SK-N-SH (cell line): ENCODE measurements at regions of chr9 and their contacts with region 1.

Region 1: DNA sequence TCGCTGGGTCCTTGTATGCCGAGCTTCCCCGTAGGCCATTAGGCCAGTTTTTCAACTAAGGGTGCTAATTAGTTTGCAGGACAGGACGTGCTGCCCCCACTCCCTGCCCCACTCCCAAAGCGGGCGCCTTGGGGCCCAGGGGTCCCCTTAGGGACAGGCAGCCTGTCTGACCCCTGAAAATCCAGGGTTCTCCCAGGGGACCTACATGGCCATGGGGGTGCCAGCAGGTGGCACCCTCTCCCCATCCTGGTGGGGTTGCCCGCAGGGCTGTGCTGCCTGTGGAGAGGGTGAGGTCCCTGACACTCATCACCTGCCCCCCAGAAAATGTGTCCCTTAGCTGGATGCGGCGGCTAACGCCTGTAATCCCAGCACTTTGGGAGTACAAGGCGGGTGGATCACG is 8.5 kb upstream of the CCDC187 start:
- DNase-seq: peak; percentile 92
- H3K4me3 ChIP-seq: no peak overlapping the region
- H3K27ac ChIP-seq: no peak overlapping the region
- H3K4me1 ChIP-seq: no peaks in the 10 kb centered on the region; a peak in 1 of 4 replicates
- H3K27me3 ChIP-seq: no peaks in the 10 kb centered on the region
- CTCF ChIP-seq: peak; percentile 68
- EP300 ChIP-seq: no peak
- RAD21 ChIP-seq: peak; percentile 85

Region 2: GRCh38 chr9:136327313-136327974 is 15.0 kb after region 1 on chr9 and contains the start of gene GPSM1:
- CTCF ChIA-PET with region 1: interaction called, 91 read pairs
- POLR2A ChIA-PET with region 1: no interaction called
- DNase-seq: peak; percentile 94
- H3K4me3 ChIP-seq: peak within 1 kb of the TSS; percentile 82 to 84
- H3K27ac ChIP-seq: peak within 1 kb of the TSS; percentile 87 to 98
- H3K4me1 ChIP-seq: peaks cover 24 to 50% of the 10 kb centered on the region in 2 experiments
- H3K27me3 ChIP-seq: no peaks in the 10 kb centered on the region
- CTCF ChIP-seq: no peak
- EP300 ChIP-seq: no peak; a peak in 1 of 4 replicates
- RAD21 ChIP-seq: no peak
- polyA plus RNA-seq, gene GPSM1: 22.8 and 26.7 TPM in 2 replicates

Region 3: GRCh38 chr9:136339173-136339957 is 26.9 kb after region 1 on chr9:
- CTCF ChIA-PET with region 1: interaction called, 27 read pairs
- POLR2A ChIA-PET with region 1: no interaction called
- DNase-seq: peak; percentile 83
- H3K4me3 ChIP-seq: peak overlapping the region in 1 of 2 experiments; percentile 29; a peak in 1 of 4 replicates
- H3K27ac ChIP-seq: no peak overlapping the region
- H3K4me1 ChIP-seq: no peaks in the 10 kb centered on the region; a peak in 1 of 4 replicates
- H3K27me3 ChIP-seq: no peaks in the 10 kb centered on the region
- CTCF ChIP-seq: peak; percentile 73
- EP300 ChIP-seq: no peak
- RAD21 ChIP-seq: peak; percentile 62

Region 4: DNA sequence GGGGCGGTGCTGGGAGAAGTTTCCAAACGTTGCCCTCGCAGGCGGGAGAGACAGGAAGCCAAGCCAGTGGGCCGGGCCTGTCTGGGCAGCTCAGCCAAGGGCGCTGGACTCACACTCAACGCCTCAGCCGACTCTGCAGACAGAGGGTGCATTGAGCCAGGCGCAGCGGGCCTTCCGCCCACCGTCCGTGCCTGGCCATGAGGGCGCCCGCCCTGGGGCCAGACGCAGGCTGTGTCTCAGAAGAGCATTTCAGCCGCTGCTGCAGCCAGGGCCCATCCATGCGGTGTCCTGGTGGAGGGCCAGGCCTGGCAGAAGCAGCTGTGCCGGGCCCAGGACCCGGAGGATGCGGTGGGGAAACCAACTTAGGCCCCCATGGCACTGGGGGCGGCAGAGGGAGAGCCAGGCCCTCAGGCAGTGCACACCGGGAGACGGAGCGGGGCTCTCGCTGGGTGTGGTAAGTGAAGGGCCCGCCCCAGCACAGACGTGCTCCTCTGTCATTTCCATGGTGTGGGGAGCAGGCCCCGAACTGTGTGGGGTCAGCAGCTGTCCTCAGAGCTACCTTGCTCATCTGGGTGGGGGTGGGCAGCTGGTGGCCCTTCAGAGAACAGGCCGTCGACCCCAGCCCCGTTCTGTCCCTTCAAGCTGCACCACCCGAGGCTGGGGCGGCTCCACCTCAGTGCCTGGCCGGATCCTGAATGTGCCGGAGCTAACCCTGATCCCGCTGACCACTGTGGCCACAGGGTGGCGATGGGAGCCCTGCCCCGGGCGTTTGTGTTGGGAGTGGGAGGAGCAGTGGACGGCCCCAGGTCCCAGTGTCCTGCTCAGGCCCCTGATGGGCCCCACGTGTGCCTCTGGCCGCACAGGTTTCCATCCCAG is 33.1 kb after region 1 on chr9:
- CTCF ChIA-PET with region 1: interaction called, 27 read pairs
- POLR2A ChIA-PET with region 1: no interaction called
- DNase-seq: peak; percentile 74
- H3K4me3 ChIP-seq: no peak overlapping the region
- H3K27ac ChIP-seq: peak overlapping the region in 1 of 2 experiments; percentile 58; a peak in 1 of 4 replicates
- H3K4me1 ChIP-seq: peaks cover 0 to 49% of the 10 kb centered on the region in 2 experiments; a peak in 1 of 4 replicates
- H3K27me3 ChIP-seq: no peaks in the 10 kb centered on the region
- CTCF ChIP-seq: peak; percentile 41
- EP300 ChIP-seq: no peak
- RAD21 ChIP-seq: peak; percentile 23

Region 5: GRCh38 chr9:136372561-136373299 is 60.3 kb after region 1 on chr9:
- CTCF ChIA-PET with region 1: interaction called, 34 read pairs
- POLR2A ChIA-PET with region 1: no interaction called
- DNase-seq: peak; percentile 84
- H3K4me3 ChIP-seq: peak overlapping the region in 1 of 2 experiments; percentile 21; a peak in 1 of 4 replicates
- H3K27ac ChIP-seq: peak overlapping the region in 1 of 2 experiments; percentile 90; a peak in 2 of 4 replicates
- H3K4me1 ChIP-seq: peaks cover 0 to 43% of the 10 kb centered on the region in 2 experiments; a peak in 1 of 4 replicates
- H3K27me3 ChIP-seq: no peaks in the 10 kb centered on the region
- CTCF ChIP-seq: peak; percentile 21; the same call in 1 of the 2 replicates
- EP300 ChIP-seq: no peak; a peak in 1 of 4 replicates
- RAD21 ChIP-seq: peak; percentile 59

Region 6: DNA sequence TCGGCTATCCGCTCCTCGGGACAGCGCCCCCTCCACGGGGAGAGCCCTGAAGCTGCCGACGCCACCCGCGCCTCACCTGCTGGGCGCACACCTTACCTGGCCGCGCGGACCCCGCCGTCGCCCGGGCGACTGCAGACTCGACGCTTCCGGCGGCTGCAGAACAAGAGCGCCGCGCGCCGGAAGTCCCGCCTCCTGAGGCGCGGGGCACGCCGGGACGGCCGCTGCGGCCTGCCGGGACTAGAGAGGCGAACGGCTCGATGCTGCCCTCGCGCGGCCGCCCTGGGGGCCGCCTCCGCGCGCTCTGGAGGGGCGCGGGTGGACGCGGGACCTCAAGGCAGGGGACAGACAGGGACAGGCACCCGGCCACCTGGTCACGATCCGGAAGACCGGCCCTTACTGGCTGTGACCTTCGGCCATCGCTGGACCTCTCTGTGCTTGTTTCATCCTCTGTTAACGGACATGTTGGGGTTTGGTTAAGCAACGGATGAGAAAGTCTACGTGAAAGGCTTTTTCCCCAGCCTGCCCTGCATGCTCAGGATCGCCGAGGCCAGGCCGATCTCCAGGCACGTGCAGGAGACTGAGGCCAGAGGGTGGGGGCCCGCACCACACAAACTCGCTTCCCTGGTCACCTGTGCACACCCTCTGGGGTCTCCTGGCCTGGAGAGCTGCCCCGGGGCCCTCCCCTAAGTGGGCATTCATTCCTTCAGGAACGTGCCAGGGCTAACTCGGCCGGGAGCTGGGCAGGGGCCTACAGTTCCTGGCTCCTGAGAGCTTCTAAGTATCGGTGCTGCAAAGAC is 87.8 kb after region 1 on chr9 and contains the start of gene SNAPC4:
- CTCF ChIA-PET with region 1: interaction called, 42 read pairs
- POLR2A ChIA-PET with region 1: no interaction called
- DNase-seq: peak; percentile 99
- H3K4me3 ChIP-seq: peak within 1 kb of the TSS; percentile 85 to 99
- H3K27ac ChIP-seq: peak within 1 kb of the TSS; percentile 30 to 73; a peak in 2 of 4 replicates
- H3K4me1 ChIP-seq: peaks cover 3 to 19% of the 10 kb centered on the region in 2 experiments; a peak in 2 of 4 replicates
- H3K27me3 ChIP-seq: no peaks in the 10 kb centered on the region
- CTCF ChIP-seq: peak; percentile 82
- EP300 ChIP-seq: peak in 1 of 2 experiments; percentile 19; a peak in 1 of 4 replicates
- RAD21 ChIP-seq: peak; percentile 76
- polyA plus RNA-seq, gene SNAPC4: 7.7 and 9.2 TPM in 2 replicates

Region 7: DNA sequence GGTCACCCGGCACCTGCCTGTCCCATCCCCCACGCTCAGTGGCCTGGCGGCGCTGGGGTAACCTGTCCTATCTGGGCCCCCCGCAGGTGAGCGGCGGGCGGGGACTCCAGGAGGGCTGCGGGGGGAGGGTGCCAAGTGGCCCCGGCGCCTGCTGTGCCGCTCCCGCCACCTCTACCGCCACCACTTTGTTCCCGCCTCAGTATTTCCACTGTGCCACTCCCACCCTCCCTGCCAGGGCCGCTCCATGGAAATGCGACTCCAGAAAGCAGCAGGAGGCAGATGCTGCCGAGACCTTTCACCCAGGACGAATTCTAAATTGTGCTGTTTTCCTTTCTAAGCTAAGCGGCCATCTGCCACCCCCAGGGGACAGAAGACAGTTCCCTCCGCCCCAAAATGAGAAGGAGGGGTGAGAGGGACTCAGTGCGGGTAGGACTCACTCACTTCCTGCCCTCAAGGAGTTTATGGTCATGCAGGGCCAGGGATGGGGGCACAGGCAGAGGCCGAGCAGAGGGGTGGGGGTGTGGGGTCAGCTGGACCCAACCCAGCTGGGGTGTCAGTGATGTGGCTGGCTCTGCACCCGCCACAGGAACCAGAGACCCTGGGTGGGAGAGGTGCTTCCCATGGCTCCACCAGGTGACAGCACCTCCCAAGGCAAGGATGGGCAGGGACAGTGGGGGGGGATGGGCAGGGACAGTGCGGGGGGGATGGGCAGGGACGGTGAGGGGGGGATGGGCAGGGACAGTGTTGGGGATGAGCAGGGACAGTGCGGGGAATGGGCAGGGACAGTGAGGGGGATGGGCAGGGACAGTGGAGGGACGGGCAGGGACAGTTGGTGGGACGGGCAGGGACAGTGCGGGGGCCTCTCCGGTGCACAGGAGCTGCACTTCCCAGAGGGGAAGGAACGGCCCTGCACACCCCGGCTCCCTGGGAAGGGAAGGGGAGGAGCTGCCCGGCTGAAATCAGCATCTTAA is 215.6 kb after region 1 on chr9:
- CTCF ChIA-PET with region 1: no interaction called
- POLR2A ChIA-PET with region 1: no interaction called
- DNase-seq: peak; percentile 86
- H3K4me3 ChIP-seq: no peak overlapping the region
- H3K27ac ChIP-seq: no peak overlapping the region
- H3K4me1 ChIP-seq: peaks cover 0 to 9% of the 10 kb centered on the region in 2 experiments; a peak in 1 of 4 replicates
- H3K27me3 ChIP-seq: no peaks in the 10 kb centered on the region
- CTCF ChIP-seq: no peak
- EP300 ChIP-seq: no peak
- RAD21 ChIP-seq: no peak